ENCODE measurements at regions of chr3 and their contacts with region 1.

Region 1: GRCh38 chr3:40524568-40525285 is at the start of gene ZNF621:
- DNase-seq: peak; percentile 94 to 97 (median 97)
- ATAC-seq: peak; percentile 100
- H3K4me3 ChIP-seq: peak within 1 kb of the TSS; percentile 93
- H3K27ac ChIP-seq: peak within 1 kb of the TSS; percentile 87
- H3K4me1 ChIP-seq: peaks cover 3% of the 10 kb centered on the region
- H3K27me3 ChIP-seq: no peaks in the 10 kb centered on the region
- total RNA-seq, gene ZNF621: 10.0 to 14.0 (median 10.7) TPM

Region 2: GRCh38 chr3:40207796-40208195 is 316.9 kb before region 1 on chr3:
- intact Hi-C with region 1: no loop called
- DNase-seq: no peak
- ATAC-seq: no peak
- H3K4me3 ChIP-seq: no peak overlapping the region
- H3K27ac ChIP-seq: no peak overlapping the region
- H3K4me1 ChIP-seq: no peaks in the 10 kb centered on the region
- H3K27me3 ChIP-seq: no peaks in the 10 kb centered on the region

Region 3: GRCh38 chr3:40456940-40457823 is 67.5 kb before region 1 on chr3 and contains the start of gene RPL14:
- intact Hi-C with region 1: no loop called
- DNase-seq: peak; percentile 97 to 98 (median 98)
- ATAC-seq: peak; percentile 93 to 95
- H3K4me3 ChIP-seq: peak within 1 kb of the TSS; percentile 43
- H3K27ac ChIP-seq: peak within 1 kb of the TSS; percentile 42
- H3K4me1 ChIP-seq: no peaks in the 10 kb centered on the region
- H3K27me3 ChIP-seq: no peaks in the 10 kb centered on the region
- total RNA-seq, gene RPL14: 1,029 to 1,161 (median 1,122) TPM

Region 4: GRCh38 chr3:40476478-40477470 is 48.0 kb before region 1 on chr3 and contains the start of gene ZNF619:
- intact Hi-C with region 1: loop called in 2 of 4 experiments (anchors 10 kb)
- DNase-seq: peak; percentile 75 to 90 (median 90)
- ATAC-seq: peak; percentile 93 to 96
- H3K4me3 ChIP-seq: peak within 1 kb of the TSS; percentile 80
- H3K27ac ChIP-seq: peak within 1 kb of the TSS; percentile 26
- H3K4me1 ChIP-seq: no peaks in the 10 kb centered on the region
- H3K27me3 ChIP-seq: no peaks in the 10 kb centered on the region
- total RNA-seq, gene ZNF619: 3.9 to 6.3 (median 5.0) TPM

Region 5: GRCh38 chr3:40741729-40742128 is 217.0 kb after region 1 on chr3:
- intact Hi-C with region 1: no loop called
- DNase-seq: no peak
- ATAC-seq: peak; percentile 87 to 88
- H3K4me3 ChIP-seq: no peak overlapping the region
- H3K27ac ChIP-seq: no peak overlapping the region
- H3K4me1 ChIP-seq: no peaks in the 10 kb centered on the region
- H3K27me3 ChIP-seq: no peaks in the 10 kb centered on the region

Region 6: DNA sequence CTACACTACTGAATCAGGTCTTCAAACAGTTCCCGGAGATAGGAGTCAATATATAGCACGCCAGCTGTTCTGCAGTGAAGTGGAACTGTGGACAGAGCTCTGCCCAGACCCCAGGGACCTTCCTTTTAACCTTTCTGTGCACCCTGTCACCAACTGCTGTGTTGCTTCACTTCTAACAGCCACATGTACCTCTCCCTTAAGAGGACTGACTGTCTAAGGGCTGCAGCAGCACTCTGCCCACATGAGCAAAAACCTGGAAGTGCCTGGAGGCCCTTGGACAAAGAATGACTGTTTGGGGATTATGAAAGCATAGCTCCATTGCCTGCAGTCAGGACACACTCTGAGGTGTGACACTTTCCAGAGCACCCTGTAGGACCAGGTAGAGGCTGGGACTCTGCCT is 586.3 kb after region 1 on chr3:
- intact Hi-C with region 1: no loop called
- DNase-seq: no peak
- ATAC-seq: no peak
- H3K4me3 ChIP-seq: no peak overlapping the region
- H3K27ac ChIP-seq: no peak overlapping the region
- H3K4me1 ChIP-seq: no peaks in the 10 kb centered on the region
- H3K27me3 ChIP-seq: no peaks in the 10 kb centered on the region

Measured in right cardiac atrium (tissue), 5 donors.